Motor neuron (in vitro differentiated cells): ENCODE measurements at regions of chr16 and their contacts with region 1.

Region 1: DNA sequence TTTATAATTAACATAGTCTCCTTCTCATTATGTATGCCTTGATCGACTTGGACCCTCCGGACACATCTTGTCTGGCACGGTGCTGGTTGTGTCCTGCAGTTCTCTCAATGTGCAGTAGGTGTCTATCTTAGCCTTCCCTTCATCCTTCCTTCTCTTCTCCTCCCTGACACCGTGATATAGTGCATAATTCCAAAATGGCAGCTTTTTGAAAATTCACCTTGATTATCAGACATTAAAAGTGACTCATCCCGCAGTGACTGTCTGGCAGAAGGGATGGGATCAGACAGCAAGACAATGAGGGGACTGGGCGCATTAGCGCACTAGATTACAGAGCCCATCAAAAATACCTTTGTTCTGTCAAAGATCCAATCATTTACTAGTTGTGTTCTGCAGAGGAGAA is 70.0 kb upstream of the PMFBP1 start:
- ATAC-seq: peak; percentile 93 to 98 (median 95)
- H3K4me3 ChIP-seq: no peak overlapping the region
- H3K27ac ChIP-seq: peak overlapping the region in 1 of 2 donors; percentile 23
- H3K4me1 ChIP-seq: peaks cover 27 to 43% of the 10 kb centered on the region in 2 donors

Region 2: GRCh38 chr16:72099377-72099818 is 142.5 kb before region 1 on chr16:
- in situ Hi-C with region 1: no loop called
- ATAC-seq: peak; percentile 69 to 98 (median 84)
- H3K4me3 ChIP-seq: no peak overlapping the region
- H3K27ac ChIP-seq: no peak overlapping the region
- H3K4me1 ChIP-seq: peaks cover 7 to 10% of the 10 kb centered on the region in 2 donors

Region 3: GRCh38 chr16:72124761-72125634 is 116.9 kb before region 1 on chr16:
- in situ Hi-C with region 1: loop called in 1 of 9 experiments (anchors 25 kb)
- ATAC-seq: peak; percentile 89 to 97 (median 92)
- H3K4me3 ChIP-seq: no peak overlapping the region
- H3K27ac ChIP-seq: peak overlapping the region; percentile 1 to 58
- H3K4me1 ChIP-seq: peaks cover 9 to 13% of the 10 kb centered on the region in 2 donors